ENCODE measurements at regions of chr7 and their contacts with region 1.

Region 1: GRCh38 chr7:154532771-154533170 is 470.2 kb downstream of the PAXIP1 start:
- DNase-seq: no peak
- ATAC-seq: no peak
- H3K4me3 ChIP-seq: no peak overlapping the region
- H3K27ac ChIP-seq: no peak overlapping the region
- H3K4me1 ChIP-seq: no peaks in the 10 kb centered on the region
- H3K27me3 ChIP-seq: no peaks in the 10 kb centered on the region
- CTCF ChIP-seq: no peak
- POLR2A ChIP-seq: no peak

Region 2: DNA sequence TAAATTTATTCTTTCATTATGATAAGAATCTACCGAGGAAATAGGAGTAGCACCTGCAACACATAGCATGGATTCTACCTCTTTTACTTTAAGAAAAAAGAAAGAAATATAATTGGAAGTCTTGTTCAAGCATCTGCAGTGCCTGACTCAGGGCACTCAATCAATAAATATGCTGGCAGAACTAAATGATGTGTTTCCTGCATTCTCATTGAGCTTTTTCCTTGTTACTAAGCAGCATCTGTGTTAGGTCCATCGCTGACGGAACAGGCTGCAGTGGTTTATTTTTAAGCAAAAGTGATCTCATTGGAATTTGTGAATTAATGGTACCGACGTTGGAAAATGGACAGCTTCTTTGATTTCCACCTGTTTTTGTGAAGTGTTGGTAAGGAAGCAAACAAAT is 63.1 kb before region 1 on chr7:
- intact Hi-C with region 1: loop called in 1 of 10 experiments (anchors 10 kb)
- DNase-seq: no peak
- ATAC-seq: no peak
- H3K4me3 ChIP-seq: no peak overlapping the region
- H3K27ac ChIP-seq: no peak overlapping the region
- H3K4me1 ChIP-seq: no peaks in the 10 kb centered on the region
- H3K27me3 ChIP-seq: no peaks in the 10 kb centered on the region
- CTCF ChIP-seq: no peak
- POLR2A ChIP-seq: no peak